Activated CD4-positive, alpha-beta T cell treated with anti-CD3 and anti-CD28 coated beads for 36 hours (primary cell): ENCODE measurements at regions of chr6 and their contacts with region 1.

Region 1: GRCh38 chr6:96897383-96898240 is at the start of gene NDUFAF4:
- DNase-seq: peak; percentile 97
- ATAC-seq: peak; percentile 95
- H3K4me3 Mint-ChIP-seq: peak within 1 kb of the TSS; percentile 92
- H3K27ac Mint-ChIP-seq: peak within 1 kb of the TSS; percentile 97
- H3K4me1 Mint-ChIP-seq: peaks cover 34% of the 10 kb centered on the region
- H3K27me3 Mint-ChIP-seq: peaks cover 10% of the 10 kb centered on the region
- total RNA-seq, gene NDUFAF4: 65.4 to 84.6 TPM

Region 2: DNA sequence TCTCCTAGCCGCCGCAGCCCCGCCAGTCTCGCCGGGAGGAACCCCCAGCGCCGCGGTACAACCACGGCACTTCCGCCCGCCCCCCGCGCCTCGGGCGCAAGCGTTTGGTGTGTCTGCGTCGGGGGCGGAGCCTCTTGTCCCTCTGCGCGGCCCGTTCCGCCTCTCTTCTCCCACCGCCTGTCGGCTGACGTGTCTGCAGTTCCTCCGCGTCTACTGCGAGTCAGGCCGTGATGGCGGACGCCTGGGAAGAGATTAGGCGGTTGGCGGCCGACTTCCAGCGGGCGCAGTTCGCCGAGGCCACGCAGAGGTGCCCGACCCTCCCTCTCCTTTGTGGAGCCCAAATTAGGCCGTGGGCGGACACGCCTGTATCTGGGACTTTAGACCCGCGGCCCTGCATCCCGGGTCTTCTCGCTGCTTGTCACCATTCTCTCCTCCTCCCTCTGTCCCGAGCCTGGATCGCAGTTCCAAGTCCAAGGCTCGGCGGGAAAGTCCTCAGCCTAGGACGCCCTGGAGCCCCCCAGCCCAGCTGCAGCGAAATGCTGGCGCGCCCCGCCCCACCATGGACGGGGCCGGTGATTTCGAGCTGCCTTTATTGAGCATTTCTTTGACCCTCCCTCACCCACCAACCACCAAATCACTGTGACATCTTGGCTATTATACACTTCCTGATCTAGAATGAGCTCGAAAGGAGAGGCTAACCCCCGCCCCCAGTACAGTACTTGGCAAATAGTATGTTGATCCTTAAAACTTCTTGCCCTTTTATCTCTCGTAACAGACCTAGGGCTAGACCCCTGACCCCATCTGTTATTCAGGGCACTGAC is 375.8 kb before region 1 on chr6 and contains the start of gene UFL1:
- CTCF ChIA-PET with region 1: no interaction called
- POLR2A ChIA-PET with region 1: no interaction called
- intact Hi-C with region 1: loop called (anchors 1 kb)
- DNase-seq: peak; percentile 96
- ATAC-seq: peak; percentile 98
- H3K4me3 Mint-ChIP-seq: peak within 1 kb of the TSS; percentile 98
- H3K27ac Mint-ChIP-seq: peak within 1 kb of the TSS; percentile 99
- H3K4me1 Mint-ChIP-seq: peaks cover 16% of the 10 kb centered on the region
- H3K27me3 Mint-ChIP-seq: no peaks in the 10 kb centered on the region
- total RNA-seq, gene UFL1: 27.3 to 28.0 TPM

Region 3: GRCh38 chr6:96626759-96627364 is 270.8 kb before region 1 on chr6:
- CTCF ChIA-PET with region 1: interaction called, 5 read pairs
- POLR2A ChIA-PET with region 1: no interaction called
- intact Hi-C with region 1: loop called (anchors 1 to 2 kb)
- DNase-seq: no peak
- ATAC-seq: peak; percentile 44
- H3K4me3 Mint-ChIP-seq: no peak overlapping the region
- H3K27ac Mint-ChIP-seq: no peak overlapping the region
- H3K4me1 Mint-ChIP-seq: no peaks in the 10 kb centered on the region
- H3K27me3 Mint-ChIP-seq: peaks cover 12% of the 10 kb centered on the region

Region 4: DNA sequence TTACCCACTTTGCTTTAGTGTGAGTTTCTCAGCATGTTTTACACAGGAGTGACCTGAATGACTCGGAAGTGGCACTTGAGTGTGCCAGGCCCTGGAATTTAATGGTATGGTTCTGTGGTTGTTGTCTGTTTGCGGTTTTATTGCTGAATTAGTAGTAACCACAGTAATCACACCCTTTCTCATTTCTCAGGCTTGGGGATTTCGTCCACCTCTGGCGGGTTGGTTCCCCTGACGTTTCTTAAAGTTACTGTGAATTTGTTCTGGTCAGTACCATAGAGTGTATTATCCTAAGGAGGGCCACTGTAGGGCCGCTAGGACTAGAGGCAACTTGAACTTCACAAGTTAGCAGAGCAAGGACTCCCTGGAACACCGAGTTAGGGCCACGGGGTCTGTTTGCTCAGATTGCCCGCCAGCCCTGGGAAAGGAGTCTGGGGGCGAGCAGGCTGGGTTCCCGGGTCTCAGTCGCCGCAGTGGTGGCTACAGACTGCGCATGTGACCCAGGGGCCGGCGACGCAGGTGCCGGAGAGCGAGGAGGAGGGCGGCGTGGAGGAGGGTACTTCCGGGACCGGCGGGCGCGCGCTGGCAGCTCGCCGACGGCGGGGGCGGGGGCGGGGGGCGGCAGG is 26.4 kb after region 1 on chr6:
- CTCF ChIA-PET with region 1: interaction called, 23 read pairs
- POLR2A ChIA-PET with region 1: interaction called, 5 read pairs
- intact Hi-C with region 1: loop called (anchors 1 kb)
- DNase-seq: no peak
- ATAC-seq: peak; percentile 62
- H3K4me3 Mint-ChIP-seq: peak overlapping the region; percentile 88
- H3K27ac Mint-ChIP-seq: peak overlapping the region; percentile 81
- H3K4me1 Mint-ChIP-seq: peaks cover 28% of the 10 kb centered on the region
- H3K27me3 Mint-ChIP-seq: no peaks in the 10 kb centered on the region

Region 5: DNA sequence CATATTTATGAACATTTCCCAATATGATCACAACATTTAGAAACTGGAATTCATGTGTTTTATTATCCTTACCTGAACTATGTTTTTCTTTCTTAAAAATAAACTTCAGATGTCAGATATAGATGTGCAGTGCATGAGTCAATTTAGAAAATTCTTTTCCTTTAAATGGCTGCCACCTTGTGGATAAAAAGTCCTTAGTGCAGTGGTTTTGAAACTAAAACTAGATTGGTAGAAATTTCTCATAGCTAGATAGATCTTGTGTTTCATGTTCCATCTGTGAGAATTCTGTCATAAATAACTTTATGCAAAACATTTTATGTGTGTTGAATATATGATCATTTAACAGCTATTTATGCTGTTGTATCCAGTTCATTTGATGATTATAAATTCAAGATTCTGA is 161.9 kb after region 1 on chr6:
- CTCF ChIA-PET with region 1: interaction called, 24 read pairs
- POLR2A ChIA-PET with region 1: interaction called, 3 read pairs
- intact Hi-C with region 1: loop called (anchors 1 to 2 kb)
- DNase-seq: no peak
- ATAC-seq: peak; percentile 73
- H3K4me3 Mint-ChIP-seq: no peak overlapping the region
- H3K27ac Mint-ChIP-seq: no peak overlapping the region
- H3K4me1 Mint-ChIP-seq: peaks cover 2% of the 10 kb centered on the region
- H3K27me3 Mint-ChIP-seq: no peaks in the 10 kb centered on the region